Right ventricle myocardium superior (tissue), 1 donor: ENCODE measurements at regions of chr10 and their contacts with region 1.

Region 1: DNA sequence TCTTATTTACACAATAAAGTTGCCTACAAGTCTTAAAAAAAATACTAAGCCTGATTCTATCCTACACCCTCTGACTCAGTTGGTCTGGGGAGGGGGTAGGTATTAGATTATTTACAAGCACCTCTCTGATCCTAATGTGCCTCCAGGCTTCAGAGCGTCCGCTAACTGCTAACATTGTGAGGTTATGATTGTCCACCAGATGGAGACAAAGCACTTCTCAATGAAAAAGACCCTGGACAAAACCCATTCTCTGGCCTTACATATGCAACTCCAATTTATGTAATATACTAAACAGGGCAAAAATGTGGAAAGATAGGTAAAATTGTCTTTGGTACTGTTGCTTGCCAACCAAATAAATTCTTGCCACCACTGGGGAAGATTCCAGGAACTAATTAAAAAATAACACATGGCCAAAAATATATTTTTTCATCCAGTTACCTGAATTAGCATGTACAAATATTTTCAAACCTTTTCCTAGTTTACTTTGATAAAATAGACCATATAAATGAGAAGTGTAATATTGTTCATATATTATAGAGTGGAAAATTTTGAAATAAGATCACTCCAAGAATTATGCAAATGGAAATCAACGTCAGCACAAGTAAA is 92.4 kb downstream of the KIF20B start:
- DNase-seq: no peak
- ATAC-seq: peak; percentile 87

Region 2: GRCh38 chr10:89502556-89502955 is 291.2 kb before region 1 on chr10:
- intact Hi-C with region 1: no loop called
- DNase-seq: no peak
- ATAC-seq: peak; percentile 25

Region 3: DNA sequence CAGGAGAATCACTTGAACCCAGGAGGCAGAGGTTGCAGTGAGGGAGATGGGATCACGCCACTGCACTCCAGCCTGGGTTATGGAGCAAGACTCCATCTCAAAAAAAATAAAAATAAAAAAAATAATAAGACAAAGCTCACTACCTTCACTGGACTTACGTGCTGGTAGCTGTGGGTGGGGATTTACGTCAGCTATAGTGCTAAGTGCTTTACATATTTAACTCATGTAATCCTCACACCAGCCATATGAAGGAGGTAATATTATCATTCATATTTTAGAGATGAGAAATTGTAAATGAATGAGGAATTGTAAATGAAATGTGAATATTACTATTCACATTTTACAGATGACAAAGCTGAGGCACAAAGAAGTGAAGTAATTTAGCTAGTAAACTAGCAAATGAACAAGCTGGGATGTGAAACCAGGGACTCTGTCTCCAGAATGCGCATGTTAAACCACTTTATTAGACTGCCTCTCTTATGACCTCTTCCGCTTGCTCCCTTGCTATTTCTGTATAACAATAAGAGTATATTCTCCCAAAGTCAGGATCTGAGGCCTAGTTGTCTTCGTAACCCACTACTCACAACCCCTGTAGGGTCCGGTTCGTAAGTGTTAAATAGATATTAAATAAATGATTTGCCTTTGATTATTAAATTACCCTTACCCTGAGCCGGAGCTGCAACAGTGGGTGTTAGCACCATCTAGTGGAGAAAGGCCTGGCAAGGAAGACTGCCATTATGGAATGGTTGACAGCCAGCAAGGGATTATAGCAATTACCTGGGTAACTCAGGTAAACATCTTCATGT is 993.8 kb after region 1 on chr10:
- intact Hi-C with region 1: loop called (anchors 10 kb)
- DNase-seq: no peak
- ATAC-seq: peak; percentile 48